Heart right ventricle (tissue), 16 donors: ENCODE measurements at regions of chr19 and their contacts with region 1.

Region 1: GRCh38 chr19:46860125-46860845 is 512 bp upstream of the ARHGAP35 start:
- DNase-seq: peak; percentile 98
- ATAC-seq: peak; percentile 86 to 93 (median 90)
- H3K4me3 ChIP-seq: peak overlapping the region; percentile 62 to 99 (median 80)
- H3K27ac ChIP-seq: peak overlapping the region; percentile 95 to 100 (median 98)
- H3K4me1 ChIP-seq: peaks cover 14 to 73% (median 51%) of the 10 kb centered on the region in 9 donors
- H3K27me3 ChIP-seq: no peaks in the 10 kb centered on the region
- CTCF ChIP-seq: peak in 1 of 9 donors; percentile 16

Region 2: GRCh38 chr19:46513461-46514236 is 346.6 kb before region 1 on chr19:
- intact Hi-C with region 1: no loop called
- DNase-seq: peak; percentile 77 to 80
- ATAC-seq: peak; percentile 85 to 95 (median 91)
- H3K4me3 ChIP-seq: no peak overlapping the region
- H3K27ac ChIP-seq: no peak overlapping the region
- H3K4me1 ChIP-seq: peaks cover 0 to 8% (median 0%) of the 10 kb centered on the region in 9 donors
- H3K27me3 ChIP-seq: peaks cover 0 to 16% (median 5%) of the 10 kb centered on the region in 7 donors
- CTCF ChIP-seq: peak; percentile 77 to 99 (median 94)

Region 3: GRCh38 chr19:46913852-46914430 is 53.7 kb after region 1 on chr19:
- intact Hi-C with region 1: loop called in 3 of 10 experiments (anchors 5 to 10 kb)
- DNase-seq: no peak
- ATAC-seq: peak in 1 of 8 donors; percentile 19
- H3K4me3 ChIP-seq: no peak overlapping the region
- H3K27ac ChIP-seq: peak overlapping the region in 8 of 10 donors; percentile 14 to 67 (median 52)
- H3K4me1 ChIP-seq: peaks cover 0 to 70% (median 53%) of the 10 kb centered on the region in 9 donors
- H3K27me3 ChIP-seq: no peaks in the 10 kb centered on the region
- CTCF ChIP-seq: no peak

Region 4: DNA sequence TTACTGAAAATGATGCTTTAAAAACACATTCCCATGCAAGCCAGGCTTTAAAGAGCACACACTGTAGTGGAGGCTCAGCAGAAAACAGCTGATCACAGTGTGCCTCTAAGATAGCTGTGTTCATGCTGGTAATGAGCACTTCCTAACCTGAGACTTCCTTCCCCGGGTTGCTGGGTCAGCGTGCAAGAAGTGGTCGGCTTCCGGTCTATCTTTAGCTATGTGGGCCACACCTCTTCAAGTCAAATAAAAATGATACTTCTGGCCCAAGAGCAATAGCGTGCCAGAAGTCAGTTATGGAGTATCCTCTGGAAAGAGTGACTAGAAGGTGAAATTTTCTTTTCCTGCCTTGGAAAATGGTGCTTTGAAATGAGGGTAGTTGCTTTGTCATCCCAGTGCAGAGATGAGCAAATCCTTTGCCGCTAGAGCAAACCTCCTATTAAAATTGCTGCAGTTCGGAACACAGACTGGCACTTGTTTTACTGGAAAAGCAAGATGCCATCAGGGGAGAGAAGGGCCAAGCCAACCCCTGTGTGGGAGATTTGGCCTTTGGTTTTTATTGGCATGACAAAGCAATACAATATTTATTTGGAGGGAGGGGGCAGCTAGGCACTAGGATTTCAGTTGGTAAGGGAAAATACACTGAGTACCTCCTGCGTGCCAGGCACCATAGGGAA is 64.7 kb after region 1 on chr19:
- intact Hi-C with region 1: loop called in 5 of 10 experiments (anchors 5 to 10 kb)
- DNase-seq: peak in 1 of 2 donors; percentile 27
- ATAC-seq: peak; percentile 44 to 80 (median 70)
- H3K4me3 ChIP-seq: peak overlapping the region in 1 of 10 donors; percentile 4
- H3K27ac ChIP-seq: peak overlapping the region in 9 of 10 donors; percentile 22 to 80 (median 54)
- H3K4me1 ChIP-seq: peaks cover 13 to 68% (median 60%) of the 10 kb centered on the region in 9 donors
- H3K27me3 ChIP-seq: no peaks in the 10 kb centered on the region
- CTCF ChIP-seq: no peak

Region 5: DNA sequence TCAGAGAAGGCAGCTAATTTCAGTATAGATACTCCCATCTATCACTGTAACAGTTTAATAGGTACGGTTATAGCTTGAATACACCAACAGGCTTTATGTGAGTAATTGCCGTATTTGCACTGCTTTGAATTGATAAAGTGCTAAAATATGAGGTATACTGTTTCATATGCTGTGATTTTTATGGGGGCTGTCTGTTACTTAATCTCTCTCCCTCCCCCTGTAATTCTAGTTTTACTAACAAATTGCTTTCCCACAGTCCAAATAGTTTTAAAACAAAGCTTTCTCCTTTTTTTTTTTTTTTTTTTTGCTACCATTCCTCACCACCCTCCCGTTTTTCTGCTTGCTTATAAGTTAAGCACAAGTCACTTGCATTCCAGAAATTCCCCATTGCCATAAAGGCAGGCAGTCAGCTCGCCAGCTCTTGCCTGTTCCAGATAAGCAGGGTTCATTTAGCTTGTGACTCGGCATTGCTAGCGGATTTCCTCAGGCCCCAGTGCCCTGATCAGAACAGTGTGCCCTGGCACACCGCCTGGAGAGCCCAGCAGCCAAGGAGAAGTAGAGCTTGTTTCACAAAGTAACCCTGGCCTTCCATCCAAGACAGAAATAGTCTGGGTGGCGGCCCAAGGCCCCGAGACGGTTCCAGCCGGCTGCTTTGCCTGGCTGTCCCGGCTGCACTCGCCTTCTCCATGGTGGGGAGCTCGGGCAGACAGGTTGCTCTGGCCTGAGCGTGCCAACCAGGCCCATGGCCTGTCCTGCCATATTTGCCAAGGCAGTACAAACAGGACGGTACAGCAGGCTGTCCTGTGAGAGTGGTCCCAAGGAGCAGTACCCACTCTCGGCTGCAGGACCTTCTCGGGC is 115.9 kb after region 1 on chr19:
- intact Hi-C with region 1: loop called in 3 of 10 experiments (anchors 5 kb)
- DNase-seq: peak; percentile 90 to 94
- ATAC-seq: peak; percentile 84 to 94 (median 90)
- H3K4me3 ChIP-seq: peak overlapping the region in 1 of 10 donors; percentile 7
- H3K27ac ChIP-seq: peak overlapping the region; percentile 68 to 96 (median 86)
- H3K4me1 ChIP-seq: peaks cover 25 to 88% (median 72%) of the 10 kb centered on the region in 9 donors
- H3K27me3 ChIP-seq: no peaks in the 10 kb centered on the region
- CTCF ChIP-seq: no peak

Region 6: DNA sequence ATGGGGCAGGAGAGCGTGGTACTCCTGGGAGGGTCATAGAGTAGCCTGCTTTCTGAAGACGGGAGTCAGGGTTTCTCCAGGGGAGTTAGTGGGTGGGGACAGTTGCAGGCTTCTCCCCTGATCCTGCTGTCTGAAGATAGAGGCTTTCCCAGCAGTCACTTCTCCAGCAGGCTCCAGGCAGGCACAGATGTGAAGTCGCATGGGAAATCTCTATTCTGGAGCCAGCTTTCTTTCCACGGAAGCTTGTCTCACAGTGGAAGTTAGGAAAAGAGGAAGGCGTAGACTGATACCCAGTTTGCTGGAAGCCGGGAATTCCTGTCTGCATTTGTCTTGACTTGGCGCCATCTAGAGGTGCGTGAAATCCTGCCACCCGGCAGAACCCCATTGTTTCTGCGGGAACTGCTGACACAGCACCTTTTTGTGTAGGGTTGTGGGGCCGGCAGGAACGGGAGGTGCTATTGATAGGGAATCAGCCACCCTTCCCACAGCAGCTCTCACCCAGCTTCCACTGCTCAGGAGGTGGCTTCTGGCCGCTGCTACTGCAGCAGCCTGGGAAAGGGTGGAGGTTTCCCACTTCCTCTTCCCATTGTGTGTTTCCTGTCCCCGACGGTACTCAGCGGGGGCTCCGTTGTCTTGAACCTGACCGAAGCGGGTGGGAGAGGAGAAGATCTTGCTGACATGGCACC is 130.8 kb after region 1 on chr19:
- intact Hi-C with region 1: loop called (anchors 1 to 5 kb)
- DNase-seq: peak; percentile 78 to 91
- ATAC-seq: peak; percentile 51 to 84 (median 73)
- H3K4me3 ChIP-seq: peak overlapping the region in 3 of 10 donors; percentile 9 to 24 (median 12)
- H3K27ac ChIP-seq: peak overlapping the region; percentile 76 to 87 (median 84)
- H3K4me1 ChIP-seq: peaks cover 24 to 83% (median 67%) of the 10 kb centered on the region in 9 donors
- H3K27me3 ChIP-seq: no peaks in the 10 kb centered on the region
- CTCF ChIP-seq: peak; percentile 73 to 96 (median 90)

Region 7: DNA sequence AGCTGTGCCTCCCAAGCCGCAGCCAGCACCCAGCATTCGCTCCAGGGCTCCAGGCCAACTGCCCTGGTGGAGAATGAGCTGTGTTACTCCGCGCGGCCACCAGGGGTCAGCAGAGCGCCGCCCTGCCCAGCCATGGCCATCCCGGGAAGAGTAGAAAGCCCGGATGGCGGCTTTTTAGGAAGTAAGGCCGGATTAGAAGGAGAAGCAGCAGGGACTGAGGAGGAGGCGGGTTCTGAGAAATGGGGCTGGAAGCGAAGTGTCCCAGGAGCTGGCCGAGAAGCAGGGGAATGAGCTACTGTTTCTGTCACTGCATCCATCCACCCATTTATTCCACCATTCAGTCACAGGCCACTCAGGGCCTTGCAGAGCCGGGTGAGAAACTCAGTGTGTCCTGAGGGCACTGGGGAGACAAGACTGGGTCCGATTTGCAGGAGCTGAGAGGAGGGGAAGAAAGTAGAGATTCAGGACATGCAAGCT is 152.8 kb after region 1 on chr19:
- intact Hi-C with region 1: no loop called
- DNase-seq: peak; percentile 81 to 87
- ATAC-seq: peak; percentile 89 to 97 (median 96)
- H3K4me3 ChIP-seq: no peak overlapping the region
- H3K27ac ChIP-seq: no peak overlapping the region
- H3K4me1 ChIP-seq: peaks cover 0 to 9% (median 4%) of the 10 kb centered on the region in 9 donors
- H3K27me3 ChIP-seq: peaks cover 0 to 11% (median 0%) of the 10 kb centered on the region in 7 donors
- CTCF ChIP-seq: peak; percentile 98 to 100 (median 99)

Region 8: DNA sequence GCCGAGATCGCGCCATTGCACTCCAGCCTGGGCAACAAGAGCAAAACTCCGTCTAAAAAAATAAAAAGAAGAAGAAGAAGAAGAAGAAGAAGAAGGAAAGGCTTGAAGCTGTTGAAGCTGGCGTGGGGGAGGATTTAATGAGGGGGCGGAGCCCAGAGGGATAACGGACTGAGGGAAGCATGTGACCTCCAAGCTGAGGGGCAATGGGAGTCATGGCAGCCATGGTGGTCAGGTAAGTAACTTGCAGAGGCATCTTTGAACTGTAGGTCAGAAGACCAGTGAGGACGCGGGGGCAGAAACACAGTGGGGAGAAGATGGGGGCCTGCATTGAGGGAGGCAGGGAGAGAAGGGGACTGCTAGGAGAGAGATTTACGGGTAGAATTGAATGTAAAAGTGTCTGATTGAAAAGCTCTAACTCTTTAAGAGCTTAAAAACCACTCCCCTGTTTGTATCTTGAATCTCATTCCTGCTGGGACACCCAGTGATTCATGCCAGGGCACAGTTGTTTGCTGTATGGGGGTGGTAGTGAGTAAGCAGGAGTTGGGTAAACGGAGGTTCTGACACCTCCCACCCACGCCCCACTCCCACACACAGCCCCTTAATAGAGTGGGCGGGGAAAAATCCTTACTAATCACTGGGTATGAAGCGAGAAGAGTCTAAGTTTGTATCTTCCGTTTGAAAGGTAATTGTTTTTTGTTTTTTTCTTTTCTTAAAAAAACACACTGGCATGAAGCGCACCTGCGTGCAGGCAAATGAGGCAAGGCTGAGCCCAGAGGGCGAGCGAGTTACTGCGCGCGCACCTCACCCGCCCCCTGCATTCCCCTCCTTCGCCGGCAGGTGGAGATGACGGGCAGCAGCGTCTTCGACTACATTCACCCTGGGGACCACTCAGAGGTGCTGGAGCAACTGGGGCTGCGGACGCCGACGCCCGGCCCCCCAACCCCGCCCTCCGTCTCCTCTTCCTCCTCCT is 175.1 kb after region 1 on chr19:
- intact Hi-C with region 1: loop called in 2 of 10 experiments (anchors 1 to 5 kb)
- DNase-seq: peak; percentile 82 to 90
- ATAC-seq: peak; percentile 87 to 95 (median 92)
- H3K4me3 ChIP-seq: peak overlapping the region; percentile 1 to 57 (median 48)
- H3K27ac ChIP-seq: peak overlapping the region in 1 of 10 donors; percentile 26
- H3K4me1 ChIP-seq: peaks cover 0 to 17% (median 9%) of the 10 kb centered on the region in 9 donors
- H3K27me3 ChIP-seq: peaks cover 0 to 25% (median 21%) of the 10 kb centered on the region in 7 donors
- CTCF ChIP-seq: peak; percentile 91 to 99 (median 97)

Region 9: GRCh38 chr19:47112997-47113849 is 252.9 kb after region 1 on chr19 and contains the start of gene ZC3H4:
- intact Hi-C with region 1: loop called in 6 of 10 experiments (anchors 5 to 10 kb)
- DNase-seq: peak; percentile 99
- ATAC-seq: peak; percentile 94 to 98 (median 97)
- H3K4me3 ChIP-seq: peak within 1 kb of the TSS; percentile 77 to 97 (median 82)
- H3K27ac ChIP-seq: peak within 1 kb of the TSS; percentile 99 to 100 (median 100)
- H3K4me1 ChIP-seq: peaks cover 0 to 37% (median 28%) of the 10 kb centered on the region in 9 donors
- H3K27me3 ChIP-seq: no peaks in the 10 kb centered on the region
- CTCF ChIP-seq: no peak
- total RNA-seq, gene ZC3H4: 19.5 to 32.8 (median 26.1) TPM